CD14-positive monocyte (primary cell): ENCODE measurements at regions of chr16 and their contacts with region 1.

Region 1: GRCh38 chr16:57167953-57168352 is 17.9 kb downstream of the PSME3IP1 start:
- DNase-seq: peak; percentile 42 to 54 (median 53)
- H3K4me3 ChIP-seq: no peak overlapping the region
- H3K4me3 Mint-ChIP-seq: no peak overlapping the region
- H3K27ac ChIP-seq: peak overlapping the region in 1 of 2 donors; percentile 76
- H3K27ac Mint-ChIP-seq: peak overlapping the region in 5 of 7 donors; percentile 50 to 92 (median 57)
- H3K4me1 ChIP-seq: peaks cover 24% of the 10 kb centered on the region in 2 donors
- H3K4me1 Mint-ChIP-seq: peaks cover 25% of the 10 kb centered on the region
- H3K27me3 ChIP-seq: no peaks in the 10 kb centered on the region
- H3K27me3 Mint-ChIP-seq: no peaks in the 10 kb centered on the region
- CTCF ChIP-seq: peak; percentile 72

Region 2: GRCh38 chr16:56866943-56867830 is 300.8 kb before region 1 on chr16:
- intact Hi-C with region 1: loop called in 1 of 2 experiments (anchors 10 kb)
- DNase-seq: peak; percentile 40 to 65 (median 55)
- H3K4me3 ChIP-seq: no peak overlapping the region
- H3K4me3 Mint-ChIP-seq: no peak overlapping the region
- H3K27ac ChIP-seq: no peak overlapping the region
- H3K27ac Mint-ChIP-seq: no peak overlapping the region
- H3K4me1 ChIP-seq: peaks cover 30 to 44% of the 10 kb centered on the region in 2 donors
- H3K4me1 Mint-ChIP-seq: peaks cover 41% of the 10 kb centered on the region
- H3K27me3 ChIP-seq: no peaks in the 10 kb centered on the region
- H3K27me3 Mint-ChIP-seq: peaks cover 0 to 9% (median 2%) of the 10 kb centered on the region in 3 donors
- CTCF ChIP-seq: peak; percentile 84

Region 3: DNA sequence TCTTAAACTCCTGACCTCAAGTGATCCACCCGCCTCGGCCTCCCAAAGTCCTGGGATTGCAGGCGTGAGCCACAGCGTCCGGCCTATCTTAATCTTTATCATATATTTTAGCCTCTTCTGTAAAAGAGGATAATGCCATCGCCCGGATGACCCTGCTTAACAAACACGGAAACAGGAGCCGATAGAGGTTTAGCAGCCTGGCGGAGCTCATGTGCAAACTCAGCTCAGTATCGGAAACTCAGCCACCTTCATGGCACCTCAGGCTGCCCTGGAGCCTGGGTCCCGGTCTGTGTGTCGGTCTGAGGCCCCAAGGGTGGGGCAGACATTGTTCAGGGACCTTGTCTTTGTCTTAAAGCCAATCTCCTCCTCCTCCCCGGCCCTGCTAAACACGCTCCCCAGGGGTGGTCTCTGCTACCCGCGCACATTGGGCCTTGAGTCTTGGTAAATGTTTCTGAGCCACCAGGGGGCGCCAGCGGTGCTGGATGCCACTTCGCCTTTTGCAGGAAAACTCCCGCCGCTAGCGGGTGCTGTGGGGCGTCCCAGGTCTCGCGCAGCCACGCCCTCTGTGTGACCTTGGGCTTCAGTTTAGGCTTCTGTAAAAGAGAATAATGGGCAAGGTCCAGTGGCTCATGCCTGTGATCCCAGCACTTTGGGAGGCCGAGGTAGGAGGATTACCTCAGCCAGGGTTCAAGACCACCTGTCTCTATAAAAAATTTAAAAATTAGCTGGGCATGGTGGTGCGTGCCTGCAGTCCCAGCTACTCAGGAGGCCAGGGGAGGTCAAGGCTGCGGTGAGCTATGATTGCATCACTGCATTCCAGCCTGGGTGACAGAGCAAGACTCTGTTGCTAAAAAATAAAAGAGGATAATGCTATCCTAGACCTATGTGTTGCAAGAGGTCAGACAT is 203.5 kb before region 1 on chr16:
- intact Hi-C with region 1: loop called in 1 of 2 experiments (anchors 10 kb)
- DNase-seq: peak; percentile 83 to 89 (median 87)
- H3K4me3 ChIP-seq: no peak overlapping the region
- H3K4me3 Mint-ChIP-seq: peak overlapping the region in 1 of 2 donors; percentile 26
- H3K27ac ChIP-seq: peak overlapping the region; percentile 65
- H3K27ac Mint-ChIP-seq: peak overlapping the region; percentile 81 to 95 (median 89)
- H3K4me1 ChIP-seq: peaks cover 61 to 66% of the 10 kb centered on the region in 2 donors
- H3K4me1 Mint-ChIP-seq: peaks cover 61% of the 10 kb centered on the region
- H3K27me3 ChIP-seq: no peaks in the 10 kb centered on the region
- H3K27me3 Mint-ChIP-seq: peaks cover 0 to 5% (median 0%) of the 10 kb centered on the region in 3 donors
- CTCF ChIP-seq: peak; percentile 98

Region 4: GRCh38 chr16:57084257-57084770 is 83.6 kb before region 1 on chr16:
- intact Hi-C with region 1: loop called (anchors 2 to 5 kb)
- DNase-seq: peak; percentile 70 to 84 (median 83)
- H3K4me3 ChIP-seq: peak overlapping the region in 1 of 3 experiments; percentile 30
- H3K4me3 Mint-ChIP-seq: peak overlapping the region in 1 of 2 donors; percentile 42
- H3K27ac ChIP-seq: peak overlapping the region; percentile 82 to 84
- H3K27ac Mint-ChIP-seq: peak overlapping the region; percentile 73 to 94 (median 86)
- H3K4me1 ChIP-seq: peaks cover 20% of the 10 kb centered on the region in 2 donors
- H3K4me1 Mint-ChIP-seq: peaks cover 29% of the 10 kb centered on the region
- H3K27me3 ChIP-seq: no peaks in the 10 kb centered on the region
- H3K27me3 Mint-ChIP-seq: peaks cover 0 to 2% (median 0%) of the 10 kb centered on the region in 3 donors
- CTCF ChIP-seq: peak; percentile 99

Region 5: DNA sequence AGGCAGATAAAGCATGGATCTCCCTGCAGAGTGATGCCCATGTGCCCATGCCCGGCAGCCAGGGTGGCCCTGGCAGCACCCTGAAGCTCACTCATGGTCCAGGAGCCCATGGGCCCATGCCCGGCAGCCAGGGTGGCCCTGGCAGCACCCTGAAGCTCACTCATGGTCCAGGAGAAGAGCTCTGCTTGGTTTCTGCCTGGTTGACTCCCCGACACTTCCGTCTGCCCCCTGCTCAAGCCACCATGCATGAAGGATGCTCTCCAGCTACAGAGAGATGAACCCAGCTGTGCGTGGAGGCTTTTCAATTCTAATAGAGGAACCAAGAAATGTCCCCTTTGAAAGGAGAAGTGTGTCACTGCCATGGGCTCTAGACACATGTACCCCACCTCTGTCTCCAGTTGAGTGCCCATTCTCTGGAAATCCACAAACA is 245.4 kb after region 1 on chr16:
- intact Hi-C with region 1: no loop called
- DNase-seq: no peak
- H3K4me3 ChIP-seq: no peak overlapping the region
- H3K4me3 Mint-ChIP-seq: no peak overlapping the region
- H3K27ac ChIP-seq: no peak overlapping the region
- H3K27ac Mint-ChIP-seq: peak overlapping the region in 1 of 7 donors; percentile 22
- H3K4me1 ChIP-seq: peaks cover 19 to 26% of the 10 kb centered on the region in 2 donors
- H3K4me1 Mint-ChIP-seq: peaks cover 18% of the 10 kb centered on the region
- H3K27me3 ChIP-seq: no peaks in the 10 kb centered on the region
- H3K27me3 Mint-ChIP-seq: peaks cover 4 to 12% (median 9%) of the 10 kb centered on the region in 3 donors
- CTCF ChIP-seq: no peak